ENCODE measurements at regions of chr4 and their contacts with region 1.

Region 1: GRCh38 chr4:75995727-75996126 is 5.0 kb upstream of the SDAD1 start:
- DNase-seq: no peak
- ATAC-seq: peak; percentile 25

Region 2: DNA sequence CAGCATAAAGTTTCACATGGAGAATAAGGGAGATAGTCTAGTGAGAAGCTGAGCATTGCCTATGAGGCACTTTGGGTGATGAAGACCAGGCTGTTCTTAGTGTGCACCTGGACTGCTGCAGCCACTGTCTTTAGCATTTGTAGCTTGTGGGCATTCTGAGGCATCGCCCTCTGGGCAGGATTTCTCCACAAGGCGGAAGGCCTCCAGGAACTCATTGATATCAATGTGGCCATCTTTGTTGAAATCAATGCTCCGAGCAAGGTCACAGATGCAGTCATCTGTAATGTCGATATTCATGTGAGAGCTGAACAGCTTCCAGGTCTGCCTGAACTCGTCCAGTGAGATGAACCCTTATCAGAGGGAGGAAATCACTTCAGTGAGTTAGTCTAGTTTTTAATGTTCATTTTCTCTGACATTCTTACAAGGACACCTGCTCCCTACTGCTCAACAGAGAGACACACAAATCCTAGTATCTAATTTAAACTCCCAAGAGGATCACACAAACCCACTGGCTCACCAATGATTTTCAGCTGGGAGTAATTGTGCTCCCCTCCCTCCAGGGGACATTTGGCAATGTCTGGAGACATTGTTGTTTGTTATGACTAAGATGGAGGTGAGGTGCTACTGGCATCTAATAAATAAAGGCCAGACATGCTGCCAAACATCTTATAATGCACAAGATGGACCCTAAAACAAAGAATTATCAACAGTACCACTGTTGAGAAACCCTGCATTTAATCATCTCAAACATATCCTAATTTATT is 135.0 kb before region 1 on chr4:
- intact Hi-C with region 1: no loop called
- DNase-seq: no peak
- ATAC-seq: no peak

Region 3: GRCh38 chr4:75881476-75881875 is 114.3 kb before region 1 on chr4:
- intact Hi-C with region 1: no loop called
- DNase-seq: no peak
- ATAC-seq: no peak

Region 4: GRCh38 chr4:76067652-76068286 is 72.0 kb after region 1 on chr4:
- intact Hi-C with region 1: loop called (anchors 2 kb)
- DNase-seq: peak; percentile 64
- ATAC-seq: peak; percentile 84

Region 5: DNA sequence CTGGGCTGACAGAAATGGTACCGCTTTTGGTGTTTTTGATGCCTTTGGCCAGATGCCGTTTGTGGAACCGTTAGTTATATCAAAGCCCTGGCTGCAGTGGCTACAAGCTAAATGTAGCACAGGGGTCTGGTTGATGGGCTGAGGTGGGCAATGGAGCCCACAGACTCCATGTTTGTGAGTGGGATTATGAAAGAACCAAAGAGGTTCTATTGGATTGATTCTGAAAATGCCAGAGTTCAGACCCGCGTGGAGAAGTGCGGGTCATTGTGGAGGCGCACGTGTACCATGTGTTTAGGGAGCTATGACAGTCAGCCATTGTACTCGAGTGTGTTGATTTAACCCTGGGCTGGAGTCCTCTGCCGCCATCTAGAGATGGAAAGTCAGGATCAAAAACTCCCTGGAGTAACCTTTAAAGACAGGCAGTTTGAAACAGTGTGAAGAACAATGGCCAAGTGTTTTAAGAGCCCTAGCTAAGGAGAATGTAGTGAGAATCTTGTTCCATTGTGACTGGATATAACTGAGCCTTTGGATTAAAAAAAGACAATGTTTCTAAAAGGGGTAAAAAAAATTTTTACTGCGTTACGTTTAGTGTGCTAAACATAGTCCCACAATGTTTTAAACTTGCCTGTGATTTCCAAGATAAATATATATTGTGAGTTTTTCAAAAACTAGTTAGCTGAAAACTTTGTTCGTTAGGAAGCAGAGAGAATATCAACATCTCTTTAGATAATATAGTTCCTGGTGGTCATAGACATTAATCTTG is 91.5 kb after region 1 on chr4:
- intact Hi-C with region 1: loop called (anchors 5 kb)
- DNase-seq: peak; percentile 38
- ATAC-seq: peak; percentile 87

Measured in left ventricle myocardium superior (tissue), 1 donor.